B cell (primary cell): ENCODE measurements at regions of chr1 and their contacts with region 1.

Region 1: DNA sequence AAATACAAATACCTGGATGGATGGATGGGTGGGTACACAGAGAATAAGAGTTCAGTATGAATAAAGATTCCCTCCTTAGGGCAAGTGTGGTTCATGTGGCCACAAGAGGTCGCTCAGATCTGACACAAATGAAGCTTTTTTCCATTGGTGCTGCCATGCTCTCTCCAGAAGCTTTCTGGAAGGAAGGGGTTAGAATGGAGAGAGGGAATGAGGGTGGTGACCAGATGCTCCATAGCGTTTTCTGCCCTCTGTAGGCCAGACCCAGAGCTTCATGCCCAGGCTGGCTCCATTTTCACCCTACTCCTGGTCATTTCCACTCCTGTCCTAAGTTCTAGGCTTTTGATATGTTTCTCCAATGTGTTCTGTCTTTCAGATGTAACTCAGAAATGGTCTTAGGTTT is 3.3 kb upstream of the FCRL6 start:
- DNase-seq: peak; percentile 65
- ATAC-seq: peak; percentile 56
- H3K4me3 ChIP-seq: no peak overlapping the region
- H3K4me3 Mint-ChIP-seq: no peak overlapping the region
- H3K27ac ChIP-seq: no peak overlapping the region
- H3K27ac Mint-ChIP-seq: no peak overlapping the region
- H3K4me1 ChIP-seq: peaks cover 0 to 7% of the 10 kb centered on the region in 2 donors
- H3K4me1 Mint-ChIP-seq: peaks cover 9% of the 10 kb centered on the region
- H3K27me3 ChIP-seq: peaks cover 0 to 30% (median 15%) of the 10 kb centered on the region in 4 experiments
- H3K27me3 Mint-ChIP-seq: peaks cover 54% of the 10 kb centered on the region
- CTCF ChIP-seq: peak; percentile 75

Region 2: DNA sequence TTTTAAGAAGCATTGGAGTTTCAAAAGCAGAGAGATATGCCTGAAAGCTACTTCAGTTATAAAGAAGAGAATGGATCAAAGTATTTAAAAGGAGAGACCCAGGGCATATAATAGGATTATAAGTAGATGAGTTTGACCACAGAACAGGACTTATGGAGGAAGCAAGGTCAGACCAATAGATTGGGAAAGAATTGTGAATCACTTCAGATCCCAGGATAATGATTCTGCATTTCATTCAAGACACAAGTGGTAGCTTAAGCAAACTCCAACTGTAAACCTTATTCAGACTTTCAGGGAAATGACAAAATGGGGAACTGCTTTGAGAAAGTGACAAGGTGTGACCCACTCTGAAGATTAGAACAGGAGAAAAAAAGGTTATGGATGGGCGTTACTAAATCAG is 244.2 kb before region 1 on chr1:
- CTCF ChIA-PET with region 1: no interaction called
- POLR2A ChIA-PET with region 1: no interaction called
- intact Hi-C with region 1: no loop called
- DNase-seq: no peak
- ATAC-seq: no peak
- H3K4me3 ChIP-seq: no peak overlapping the region
- H3K4me3 Mint-ChIP-seq: no peak overlapping the region
- H3K27ac ChIP-seq: no peak overlapping the region
- H3K27ac Mint-ChIP-seq: no peak overlapping the region
- H3K4me1 ChIP-seq: no peaks in the 10 kb centered on the region
- H3K4me1 Mint-ChIP-seq: no peaks in the 10 kb centered on the region
- H3K27me3 ChIP-seq: no peaks in the 10 kb centered on the region
- H3K27me3 Mint-ChIP-seq: peaks cover 13% of the 10 kb centered on the region
- CTCF ChIP-seq: no peak

Region 3: GRCh38 chr1:159775716-159776115 is 23.2 kb before region 1 on chr1:
- CTCF ChIA-PET with region 1: interaction called, 21 read pairs
- POLR2A ChIA-PET with region 1: no interaction called
- intact Hi-C with region 1: loop called (anchors 2 kb)
- DNase-seq: no peak
- ATAC-seq: no peak
- H3K4me3 ChIP-seq: no peak overlapping the region
- H3K4me3 Mint-ChIP-seq: no peak overlapping the region
- H3K27ac ChIP-seq: no peak overlapping the region
- H3K27ac Mint-ChIP-seq: no peak overlapping the region
- H3K4me1 ChIP-seq: peaks cover 8 to 10% of the 10 kb centered on the region in 2 donors
- H3K4me1 Mint-ChIP-seq: peaks cover 6% of the 10 kb centered on the region
- H3K27me3 ChIP-seq: peaks cover 0 to 15% (median 7%) of the 10 kb centered on the region in 4 experiments
- H3K27me3 Mint-ChIP-seq: peaks cover 31% of the 10 kb centered on the region
- CTCF ChIP-seq: no peak

Region 4: DNA sequence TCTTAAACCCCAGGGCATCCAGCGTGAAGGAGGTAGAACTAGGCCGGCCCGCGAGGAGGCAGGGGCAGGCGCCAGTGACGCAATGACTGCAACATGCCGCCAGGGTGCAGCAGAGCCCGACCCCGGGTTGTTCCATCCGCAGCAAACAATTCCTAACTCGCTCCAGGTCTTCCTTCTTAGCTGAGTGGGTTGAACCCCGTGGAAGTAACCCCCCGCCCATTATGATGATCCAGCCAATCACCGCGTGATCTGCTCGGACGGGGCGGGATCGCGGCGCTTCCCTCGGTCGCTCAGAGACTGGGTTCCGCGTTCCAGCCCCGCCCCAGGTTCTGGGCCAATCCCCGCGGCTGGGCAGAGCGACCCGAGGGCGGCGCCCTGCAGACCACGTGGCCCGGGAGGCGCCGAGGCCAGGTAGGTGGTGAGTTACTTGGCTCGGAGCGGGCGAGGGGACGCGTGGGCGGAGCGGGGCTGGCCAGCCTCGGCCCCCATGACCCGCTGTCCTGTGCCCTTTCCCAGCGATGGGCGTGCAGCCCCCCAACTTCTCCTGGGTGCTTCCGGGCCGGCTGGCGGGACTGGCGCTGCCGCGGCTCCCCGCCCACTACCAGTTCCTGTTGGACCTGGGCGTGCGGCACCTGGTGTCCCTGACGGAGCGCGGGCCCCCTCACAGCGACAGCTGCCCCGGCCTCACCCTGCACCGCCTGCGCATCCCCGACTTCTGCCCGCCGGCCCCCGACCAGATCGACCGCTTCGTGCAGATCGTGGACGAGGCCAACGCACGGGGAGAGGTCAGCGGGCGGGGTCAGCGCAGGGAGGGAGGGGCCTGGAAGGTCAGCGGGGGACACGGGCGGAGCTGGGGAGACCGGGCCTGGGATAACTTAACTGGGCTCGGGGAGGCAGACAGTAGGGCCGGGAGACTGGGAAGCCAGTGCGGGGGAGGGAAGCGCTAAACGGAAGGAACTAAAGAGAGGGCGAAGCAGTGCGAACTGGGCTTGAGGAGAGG is 18.0 kb before region 1 on chr1 and contains the start of gene DUSP23:
- CTCF ChIA-PET with region 1: interaction called, 21 read pairs
- POLR2A ChIA-PET with region 1: no interaction called
- intact Hi-C with region 1: loop called (anchors 2 kb)
- DNase-seq: peak; percentile 96
- ATAC-seq: peak; percentile 97
- H3K4me3 ChIP-seq: peak within 1 kb of the TSS; percentile 65 to 74 (median 71)
- H3K4me3 Mint-ChIP-seq: peak within 1 kb of the TSS; percentile 92
- H3K27ac ChIP-seq: peak within 1 kb of the TSS in 1 of 2 donors; percentile 53
- H3K27ac Mint-ChIP-seq: peak within 1 kb of the TSS; percentile 90
- H3K4me1 ChIP-seq: peaks cover 13 to 15% of the 10 kb centered on the region in 2 donors
- H3K4me1 Mint-ChIP-seq: peaks cover 9% of the 10 kb centered on the region
- H3K27me3 ChIP-seq: peaks cover 0 to 4% (median 0%) of the 10 kb centered on the region in 4 experiments
- H3K27me3 Mint-ChIP-seq: peaks cover 2% of the 10 kb centered on the region
- CTCF ChIP-seq: peak; percentile 78
- total RNA-seq, gene DUSP23: 9.5 and 9.6 TPM in 2 replicates

Region 5: DNA sequence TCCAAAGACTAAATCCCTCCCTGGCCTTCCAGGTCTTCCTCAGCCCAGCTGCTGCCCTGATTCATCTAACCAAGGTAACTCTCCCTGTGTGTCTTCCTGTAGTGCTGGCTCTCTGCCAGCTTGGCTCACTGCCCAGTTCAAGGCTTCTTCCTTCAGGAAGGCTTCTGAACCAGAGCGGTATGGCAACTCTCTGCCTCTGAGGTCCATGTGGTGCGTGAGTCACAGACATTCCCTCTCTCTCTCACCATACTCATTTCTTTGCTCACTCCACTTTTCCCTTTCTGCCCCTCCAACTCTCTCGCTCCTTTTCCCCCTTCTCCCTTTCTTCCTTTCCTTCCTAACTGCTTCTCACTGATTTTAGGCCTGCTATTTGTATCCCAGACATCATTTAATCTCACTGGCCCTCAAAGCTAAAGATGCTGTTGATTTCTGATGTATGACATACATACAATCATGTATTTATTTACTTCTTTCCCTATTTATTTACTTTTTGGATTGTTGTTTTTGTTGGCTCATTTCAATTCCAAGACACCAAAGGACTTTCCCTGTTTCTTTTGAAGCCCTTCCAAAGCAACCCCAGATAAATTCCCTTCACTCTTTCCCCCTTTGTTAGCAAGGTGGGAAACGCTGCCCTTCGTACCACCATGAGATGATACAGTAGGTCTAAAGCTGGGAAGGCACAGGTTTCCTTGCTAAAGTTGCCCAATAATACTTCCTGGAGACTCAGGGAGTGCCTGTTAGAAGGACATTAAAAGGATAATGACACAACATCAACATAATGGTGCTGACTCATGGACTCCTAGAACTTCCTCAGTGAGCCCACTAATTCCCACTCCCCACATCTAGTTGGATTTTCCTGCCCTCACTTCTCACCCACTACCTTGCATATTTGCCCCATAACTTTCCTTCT is 83.3 kb after region 1 on chr1:
- CTCF ChIA-PET with region 1: interaction called, 12 read pairs
- POLR2A ChIA-PET with region 1: no interaction called
- intact Hi-C with region 1: no loop called
- DNase-seq: no peak
- ATAC-seq: no peak
- H3K4me3 ChIP-seq: no peak overlapping the region
- H3K4me3 Mint-ChIP-seq: no peak overlapping the region
- H3K27ac ChIP-seq: no peak overlapping the region
- H3K27ac Mint-ChIP-seq: no peak overlapping the region
- H3K4me1 ChIP-seq: no peaks in the 10 kb centered on the region
- H3K4me1 Mint-ChIP-seq: peaks cover 2% of the 10 kb centered on the region
- H3K27me3 ChIP-seq: no peaks in the 10 kb centered on the region
- H3K27me3 Mint-ChIP-seq: no peaks in the 10 kb centered on the region
- CTCF ChIP-seq: no peak

Region 6: GRCh38 chr1:159924981-159925712 is 126.3 kb after region 1 on chr1 and contains the start of gene TAGLN2:
- CTCF ChIA-PET with region 1: interaction called, 12 read pairs
- POLR2A ChIA-PET with region 1: no interaction called
- intact Hi-C with region 1: no loop called
- DNase-seq: peak; percentile 93
- ATAC-seq: peak; percentile 65
- H3K4me3 ChIP-seq: peak within 1 kb of the TSS; percentile 81 to 100 (median 99)
- H3K4me3 Mint-ChIP-seq: peak within 1 kb of the TSS; percentile 96
- H3K27ac ChIP-seq: peak within 1 kb of the TSS; percentile 98 to 100
- H3K27ac Mint-ChIP-seq: peak within 1 kb of the TSS; percentile 99
- H3K4me1 ChIP-seq: peaks cover 40 to 45% of the 10 kb centered on the region in 2 donors
- H3K4me1 Mint-ChIP-seq: peaks cover 50% of the 10 kb centered on the region
- H3K27me3 ChIP-seq: no peaks in the 10 kb centered on the region
- H3K27me3 Mint-ChIP-seq: no peaks in the 10 kb centered on the region
- CTCF ChIP-seq: no peak
- total RNA-seq, gene TAGLN2: 342 and 354 TPM in 2 replicates

Region 7: DNA sequence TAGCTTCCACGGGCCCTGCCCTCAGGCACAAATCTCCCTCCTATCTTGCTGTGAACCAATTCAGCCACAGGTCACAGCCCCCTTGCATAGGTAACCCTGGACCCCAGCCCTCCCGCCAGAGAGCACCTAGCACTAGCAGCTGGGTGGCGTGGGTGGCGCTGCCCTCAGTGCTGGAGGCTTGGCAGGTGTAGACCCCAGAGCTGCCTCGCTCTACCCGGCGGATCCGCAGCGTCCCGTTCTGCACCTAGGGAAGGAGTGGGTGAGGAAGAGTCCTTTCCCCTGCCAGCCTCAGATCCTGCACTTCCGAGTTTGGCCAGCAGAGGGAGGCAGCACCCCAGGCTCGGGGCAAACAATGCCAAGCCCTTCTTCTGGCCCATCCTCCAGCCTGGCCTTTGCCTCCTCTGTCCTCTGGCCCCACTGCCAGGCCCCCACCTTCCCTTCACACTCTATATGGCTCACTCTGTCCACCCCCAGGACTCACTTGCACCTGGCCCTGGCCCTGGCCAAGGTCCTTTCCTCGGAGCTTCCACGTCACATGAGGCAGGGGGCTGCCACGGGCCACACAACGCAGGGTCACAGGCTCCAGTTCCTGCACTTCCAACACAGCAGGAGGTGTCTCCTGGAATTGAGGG is 137.5 kb after region 1 on chr1:
- CTCF ChIA-PET with region 1: interaction called, 19 read pairs
- POLR2A ChIA-PET with region 1: no interaction called
- intact Hi-C with region 1: no loop called
- DNase-seq: peak; percentile 85
- ATAC-seq: peak; percentile 89
- H3K4me3 ChIP-seq: peak overlapping the region in 1 of 5 experiments; percentile 17
- H3K4me3 Mint-ChIP-seq: peak overlapping the region; percentile 49
- H3K27ac ChIP-seq: no peak overlapping the region
- H3K27ac Mint-ChIP-seq: peak overlapping the region; percentile 61
- H3K4me1 ChIP-seq: peaks cover 37 to 43% of the 10 kb centered on the region in 2 donors
- H3K4me1 Mint-ChIP-seq: peaks cover 47% of the 10 kb centered on the region
- H3K27me3 ChIP-seq: no peaks in the 10 kb centered on the region
- H3K27me3 Mint-ChIP-seq: peaks cover 4% of the 10 kb centered on the region
- CTCF ChIP-seq: peak; percentile 96

Region 8: GRCh38 chr1:159945483-159946241 is 146.8 kb after region 1 on chr1 and contains the start of gene IGSF9:
- CTCF ChIA-PET with region 1: interaction called, 34 read pairs
- POLR2A ChIA-PET with region 1: no interaction called
- intact Hi-C with region 1: loop called (anchors 1 kb)
- DNase-seq: peak; percentile 81
- ATAC-seq: peak; percentile 94
- H3K4me3 ChIP-seq: peak within 1 kb of the TSS in 4 of 5 experiments; percentile 8 to 46 (median 42)
- H3K4me3 Mint-ChIP-seq: peak within 1 kb of the TSS; percentile 60
- H3K27ac ChIP-seq: no peak within 1 kb of the TSS
- H3K27ac Mint-ChIP-seq: no peak within 1 kb of the TSS
- H3K4me1 ChIP-seq: peaks cover 15 to 18% of the 10 kb centered on the region in 2 donors
- H3K4me1 Mint-ChIP-seq: peaks cover 15% of the 10 kb centered on the region
- H3K27me3 ChIP-seq: peaks cover 0 to 34% (median 18%) of the 10 kb centered on the region in 4 experiments
- H3K27me3 Mint-ChIP-seq: peaks cover 40% of the 10 kb centered on the region
- CTCF ChIP-seq: peak; percentile 45
- total RNA-seq, gene IGSF9: 0.15 and 0.37 TPM in 2 replicates